ENCODE measurements at regions of chr19 and their contacts with region 1.

Region 1: DNA sequence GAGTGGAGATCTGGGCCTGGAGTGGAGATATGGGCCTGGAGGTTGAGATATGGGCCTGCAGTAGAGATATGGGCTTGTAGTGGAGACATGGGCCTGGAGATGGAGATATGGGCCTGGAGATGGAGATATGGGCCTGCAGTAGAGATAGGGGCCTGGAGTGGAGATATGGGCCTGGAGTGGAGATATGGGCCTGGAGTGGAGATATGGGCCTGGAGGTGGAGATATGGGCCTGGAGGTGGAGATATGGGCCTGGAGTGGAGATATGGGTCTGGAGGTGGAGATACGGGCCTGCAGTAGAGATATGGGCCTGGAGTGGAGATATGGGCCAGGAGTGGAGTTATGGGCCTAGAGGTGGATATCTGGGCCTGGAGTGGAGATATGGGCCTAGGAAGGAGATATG is 402 bp downstream of the KIR2DL3 start:
- DNase-seq: no peak
- ATAC-seq: no peak
- H3K4me3 ChIP-seq: peak overlapping the region; percentile 11
- H3K4me3 Mint-ChIP-seq: peak overlapping the region; percentile 85
- H3K27ac ChIP-seq: peak overlapping the region; percentile 71
- H3K27ac Mint-ChIP-seq: peak overlapping the region; percentile 86 to 87
- H3K4me1 ChIP-seq: peaks cover 29% of the 10 kb centered on the region
- H3K4me1 Mint-ChIP-seq: peaks cover 32 to 39% of the 10 kb centered on the region in 2 donors
- H3K27me3 ChIP-seq: no peaks in the 10 kb centered on the region
- H3K27me3 Mint-ChIP-seq: peaks cover 5 to 9% of the 10 kb centered on the region in 2 donors
- CTCF ChIP-seq: no peak

Region 2: DNA sequence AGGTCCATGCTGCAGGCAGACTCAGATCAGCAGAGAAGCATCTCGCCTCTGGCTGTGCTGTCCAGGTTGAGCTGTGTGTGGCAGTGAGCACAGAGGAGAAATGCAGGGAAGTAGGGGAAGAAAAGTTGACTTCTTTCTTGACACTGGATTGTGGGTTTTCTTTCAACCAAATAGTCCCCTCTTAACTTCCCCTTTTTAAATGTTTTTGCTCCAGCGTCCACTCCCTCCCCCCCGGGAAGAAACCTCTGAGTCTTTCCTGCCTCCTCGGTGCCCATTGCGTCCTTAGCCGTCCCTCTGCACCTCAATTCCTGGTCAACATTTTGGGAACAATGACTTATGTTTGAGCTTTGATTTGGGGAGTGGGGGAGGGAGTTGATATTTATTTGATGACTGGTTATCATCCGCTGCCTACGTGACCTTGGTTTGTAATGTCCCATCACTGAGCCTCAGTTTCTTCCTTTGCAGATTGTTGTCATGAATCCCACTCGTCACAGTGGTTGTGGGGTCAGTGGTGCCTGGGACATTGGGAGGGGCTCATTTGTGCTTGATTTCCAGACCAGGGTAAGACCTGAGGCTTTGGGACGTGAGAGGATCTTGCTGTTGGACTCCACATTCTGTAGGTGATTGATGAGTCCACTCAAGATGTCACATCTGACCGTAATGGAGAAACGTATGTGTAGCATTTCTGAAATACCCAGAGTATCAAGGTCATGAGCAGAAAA is 457.5 kb before region 1 on chr19 and contains the start of gene LILRB2:
- intact Hi-C with region 1: no loop called
- DNase-seq: no peak
- ATAC-seq: peak in 1 of 3 donors; percentile 48
- H3K4me3 ChIP-seq: peak within 1 kb of the TSS; percentile 10
- H3K4me3 Mint-ChIP-seq: no peak within 1 kb of the TSS
- H3K27ac ChIP-seq: no peak within 1 kb of the TSS
- H3K27ac Mint-ChIP-seq: no peak within 1 kb of the TSS
- H3K4me1 ChIP-seq: peaks cover 43% of the 10 kb centered on the region
- H3K4me1 Mint-ChIP-seq: peaks cover 12 to 28% of the 10 kb centered on the region in 2 donors
- H3K27me3 ChIP-seq: no peaks in the 10 kb centered on the region
- H3K27me3 Mint-ChIP-seq: peaks cover 7 to 18% of the 10 kb centered on the region in 2 donors
- CTCF ChIP-seq: no peak
- total RNA-seq, gene LILRB2: 4.6 to 41.4 (median 23.7) TPM

Region 3: DNA sequence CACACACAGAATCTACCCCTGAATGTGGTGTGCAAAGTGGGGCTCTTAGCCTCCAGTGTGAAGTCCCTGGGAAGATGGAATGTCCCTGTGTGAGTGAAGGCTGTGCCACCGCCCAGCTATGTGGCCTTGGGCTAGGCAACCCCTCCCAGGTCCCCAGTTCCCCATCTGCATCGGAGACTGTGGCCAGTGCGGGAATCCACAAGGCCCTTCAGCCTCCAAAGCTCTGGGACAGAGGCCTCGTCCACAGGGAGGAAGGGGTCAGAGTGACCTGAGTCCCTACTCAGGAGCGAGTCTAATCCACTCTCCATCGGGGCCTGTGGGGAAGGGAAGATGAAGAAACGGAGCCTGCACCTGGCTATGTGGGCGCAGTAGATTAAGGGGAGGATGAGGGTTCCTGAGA is 33.8 kb before region 1 on chr19:
- intact Hi-C with region 1: loop called (anchors 5 kb)
- DNase-seq: no peak
- ATAC-seq: no peak
- H3K4me3 ChIP-seq: no peak overlapping the region
- H3K4me3 Mint-ChIP-seq: peak overlapping the region; percentile 15
- H3K27ac ChIP-seq: no peak overlapping the region
- H3K27ac Mint-ChIP-seq: no peak overlapping the region
- H3K4me1 ChIP-seq: peaks cover 28% of the 10 kb centered on the region
- H3K4me1 Mint-ChIP-seq: peaks cover 42 to 67% of the 10 kb centered on the region in 2 donors
- H3K27me3 ChIP-seq: peaks cover 12% of the 10 kb centered on the region
- H3K27me3 Mint-ChIP-seq: peaks cover 49 to 55% of the 10 kb centered on the region in 2 donors
- CTCF ChIP-seq: no peak

Region 4: DNA sequence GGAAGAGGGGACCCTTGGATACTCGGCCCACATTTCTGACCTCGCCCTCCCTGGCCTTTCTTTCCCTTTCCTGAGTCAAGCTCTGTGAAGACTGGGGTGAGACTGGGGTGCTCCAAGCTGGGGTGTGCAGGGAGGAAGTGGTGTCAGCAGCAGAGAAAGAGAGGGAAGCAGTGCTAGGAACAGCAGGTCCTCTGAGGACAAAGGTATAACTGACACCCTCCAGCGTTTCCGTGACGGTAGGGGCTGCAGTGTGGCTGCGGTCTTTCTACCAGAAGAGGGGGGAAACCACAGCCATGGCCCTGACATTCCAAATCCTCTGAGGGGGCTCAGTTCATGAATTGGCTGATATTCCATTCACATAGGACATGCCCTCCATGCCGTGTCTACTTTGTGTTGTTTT is 112.6 kb after region 1 on chr19:
- intact Hi-C with region 1: loop called (anchors 1 kb)
- DNase-seq: no peak
- ATAC-seq: peak; percentile 46 to 61 (median 54)
- H3K4me3 ChIP-seq: no peak overlapping the region
- H3K4me3 Mint-ChIP-seq: peak overlapping the region; percentile 79
- H3K27ac ChIP-seq: peak overlapping the region; percentile 86
- H3K27ac Mint-ChIP-seq: peak overlapping the region; percentile 80 to 98
- H3K4me1 ChIP-seq: peaks cover 26% of the 10 kb centered on the region
- H3K4me1 Mint-ChIP-seq: peaks cover 32 to 51% of the 10 kb centered on the region in 2 donors
- H3K27me3 ChIP-seq: no peaks in the 10 kb centered on the region
- H3K27me3 Mint-ChIP-seq: peaks cover 3 to 13% of the 10 kb centered on the region in 2 donors
- CTCF ChIP-seq: no peak

Measured in natural killer cell (primary cell).